ENCODE measurements at regions of chr20 and their contacts with region 1.

Region 1: GRCh38 chr20:49338061-49338460 is 60.2 kb upstream of the ZNFX1 start:
- DNase-seq: no peak
- ATAC-seq: no peak

Region 2: DNA sequence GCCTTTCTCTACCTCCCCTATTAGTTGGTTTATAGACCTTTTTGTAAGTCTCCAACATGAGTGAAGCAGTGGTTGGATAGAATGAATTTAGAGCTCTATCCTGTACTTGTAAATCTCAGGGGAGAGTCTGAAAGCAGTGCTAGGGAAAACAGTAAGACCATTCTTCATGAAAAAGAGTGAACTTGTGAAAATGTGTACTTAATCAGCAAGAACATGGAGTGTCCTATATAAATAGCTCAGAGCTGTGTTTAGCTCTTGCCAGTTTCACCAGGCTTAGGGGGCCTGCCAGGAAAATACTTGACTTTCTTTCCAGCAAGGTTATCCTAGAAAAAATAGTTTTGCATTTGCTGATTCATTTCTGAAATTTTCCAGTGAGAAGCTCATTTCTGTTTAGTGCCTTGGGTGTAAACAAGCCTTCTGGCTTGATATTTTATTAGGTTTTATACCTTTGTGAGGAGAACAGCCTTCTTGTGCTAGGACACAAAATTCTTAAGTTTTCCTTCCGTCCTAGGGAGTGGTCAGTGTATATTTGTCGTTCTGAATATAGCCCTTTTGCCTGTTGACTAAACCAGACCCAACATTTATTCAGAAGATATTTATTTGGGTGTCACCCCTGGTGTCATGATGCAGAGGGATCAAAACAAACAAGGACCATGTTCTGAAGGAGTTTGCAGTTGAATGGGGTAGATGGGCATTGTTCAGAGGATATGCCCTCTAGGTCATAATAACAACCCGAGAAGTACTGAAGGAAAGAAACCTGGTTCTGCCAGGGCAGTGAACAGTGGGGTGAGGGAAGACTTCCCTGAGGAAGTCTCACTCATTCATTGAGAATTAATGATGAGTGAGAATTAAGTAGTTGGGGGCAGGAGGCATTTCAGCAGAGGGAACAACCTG is 409.0 kb before region 1 on chr20:
- intact Hi-C with region 1: no loop called
- DNase-seq: peak; percentile 32
- ATAC-seq: peak; percentile 71 to 76

Region 3: GRCh38 chr20:49484180-49485140 is 146.4 kb after region 1 on chr20:
- intact Hi-C with region 1: loop called (anchors 2 kb)
- DNase-seq: peak; percentile 84
- ATAC-seq: peak; percentile 89 to 92

Region 4: DNA sequence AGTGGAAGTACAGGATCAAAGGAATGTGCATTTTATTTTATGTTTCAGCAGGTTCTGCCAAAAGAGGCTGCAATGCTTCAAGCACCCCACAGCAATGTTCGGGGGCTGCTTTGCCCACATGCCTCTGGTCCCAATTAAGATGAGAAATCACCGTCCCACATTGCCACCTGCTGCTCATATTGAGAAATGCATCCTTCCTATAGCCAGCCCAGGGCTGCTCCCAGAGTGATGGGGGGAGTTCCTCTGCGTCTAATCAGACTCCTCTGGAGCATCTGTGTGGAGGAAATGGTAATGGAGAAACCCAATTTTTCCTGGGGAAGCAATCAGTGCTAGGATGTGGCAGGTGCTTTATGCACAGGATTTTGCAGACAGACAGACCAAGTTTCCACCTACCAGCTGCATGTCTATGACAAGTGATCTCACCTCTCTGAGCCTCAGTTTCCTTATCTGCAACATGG is 196.2 kb after region 1 on chr20:
- intact Hi-C with region 1: loop called (anchors 2 to 10 kb)
- DNase-seq: no peak
- ATAC-seq: peak; percentile 45 to 70

Region 5: GRCh38 chr20:49729721-49730138 is 391.7 kb after region 1 on chr20:
- intact Hi-C with region 1: no loop called
- DNase-seq: no peak
- ATAC-seq: peak in 1 of 2 donors; percentile 41